AG04449 (cell line): ENCODE measurements at regions of chr1 and their contacts with region 1.

Region 1: DNA sequence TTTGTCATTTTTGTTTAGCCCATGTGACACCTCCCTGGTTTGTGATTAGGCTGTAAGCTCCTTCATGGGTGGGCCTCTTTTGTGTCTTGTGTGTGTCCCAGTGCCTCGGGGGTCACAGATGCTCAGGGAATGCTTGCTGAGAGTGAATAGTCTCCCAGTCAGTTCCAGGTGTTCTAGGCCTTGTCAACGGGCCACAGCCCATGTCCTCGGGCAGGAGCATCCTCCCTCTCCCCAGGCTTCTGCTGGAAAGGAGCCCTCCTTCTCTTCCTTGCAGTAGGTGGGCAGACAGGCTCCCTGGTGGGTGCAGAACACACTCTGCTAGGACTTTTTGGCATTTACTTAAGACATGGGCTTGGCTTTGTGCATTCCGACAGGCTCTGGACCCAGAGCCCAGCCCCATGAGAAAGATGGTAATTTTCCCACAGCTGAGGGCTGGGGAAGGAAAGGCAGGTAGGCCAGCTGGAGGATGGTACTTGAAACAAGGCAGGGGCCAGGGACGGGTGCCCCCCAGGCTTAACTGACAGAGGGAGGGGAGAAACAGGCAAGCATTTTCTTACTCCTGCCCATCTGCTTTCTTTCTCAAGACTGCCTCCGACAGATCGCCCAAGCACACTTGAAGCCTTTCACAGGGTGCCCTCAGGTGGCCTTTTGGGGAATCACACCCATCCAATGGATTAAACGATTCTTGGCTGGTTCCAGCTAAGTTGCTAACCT is 7.1 kb upstream of the CPLANE2 start:
- DNase-seq: peak; percentile 36
- H3K4me3 ChIP-seq: no peak overlapping the region
- CTCF ChIP-seq: peak; percentile 80

Region 2: GRCh38 chr1:16187748-16188401 is 56.2 kb before region 1 on chr1:
- CTCF ChIA-PET with region 1: interaction called, 13 read pairs
- POLR2A ChIA-PET with region 1: no interaction called
- DNase-seq: no peak
- H3K4me3 ChIP-seq: no peak overlapping the region
- CTCF ChIP-seq: peak; percentile 97

Region 3: DNA sequence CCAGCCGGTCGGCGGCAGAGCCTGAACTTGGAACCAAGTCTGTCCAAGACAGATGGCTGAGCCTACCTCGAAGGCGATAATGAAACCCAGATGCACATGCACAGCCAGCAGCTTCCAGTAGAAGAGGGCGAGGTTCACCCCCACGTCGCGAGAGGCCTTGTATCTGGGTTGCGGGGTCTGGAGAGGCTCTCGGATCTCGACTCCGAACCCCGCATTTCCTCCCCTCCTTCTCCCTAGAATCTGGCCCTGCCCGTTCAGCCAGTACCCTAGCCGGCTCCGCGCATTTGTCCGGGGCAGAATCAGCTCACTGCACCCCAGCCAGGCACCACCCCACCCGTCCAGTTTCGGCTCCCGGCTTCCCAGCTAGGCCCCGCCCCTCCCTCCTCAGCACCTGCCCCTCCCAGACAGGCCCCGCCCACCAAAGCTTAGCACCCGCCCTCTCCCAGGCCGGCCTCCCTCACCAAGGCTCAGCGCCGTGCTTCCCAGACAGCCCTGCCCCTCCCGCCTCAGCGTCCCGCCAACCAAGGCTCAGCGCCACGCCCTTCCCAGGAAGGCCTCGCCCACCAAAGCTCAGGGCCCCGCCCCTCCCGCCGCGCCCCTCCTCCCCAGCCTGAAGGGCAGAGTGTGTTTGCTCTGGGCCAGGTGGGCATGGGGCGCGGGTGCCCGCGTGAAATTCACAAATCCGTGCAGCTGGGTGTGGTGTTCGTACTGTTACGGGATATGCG is 26.9 kb before region 1 on chr1:
- CTCF ChIA-PET with region 1: interaction called, 16 read pairs
- POLR2A ChIA-PET with region 1: no interaction called
- DNase-seq: peak; percentile 34
- H3K4me3 ChIP-seq: peak overlapping the region; percentile 64
- CTCF ChIP-seq: no peak

Region 4: GRCh38 chr1:16260814-16261213 is 16.7 kb after region 1 on chr1:
- CTCF ChIA-PET with region 1: interaction called, 60 read pairs
- POLR2A ChIA-PET with region 1: interaction called, 4 read pairs
- DNase-seq: peak; percentile 49
- H3K4me3 ChIP-seq: no peak overlapping the region
- CTCF ChIP-seq: no peak

Region 5: DNA sequence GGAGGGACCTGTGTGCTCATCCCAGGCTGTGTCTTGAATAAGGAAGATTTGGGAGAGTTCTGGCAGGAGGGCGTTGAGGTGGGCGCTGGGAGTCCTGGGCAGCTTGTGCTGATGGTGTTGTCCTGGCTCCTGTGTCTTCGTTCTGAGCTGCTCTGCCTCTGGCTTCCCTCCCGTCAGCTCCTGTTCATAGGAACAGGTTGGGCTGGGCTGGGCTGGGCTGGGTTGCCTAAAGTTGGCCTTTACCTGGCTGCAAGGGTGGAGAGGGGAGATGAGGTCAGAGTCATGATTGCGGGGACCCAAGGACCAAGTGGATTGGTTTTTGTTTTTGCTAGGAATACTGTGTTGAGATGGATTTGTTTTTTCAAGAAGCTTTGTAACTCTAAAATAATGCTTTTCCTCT is 205.6 kb after region 1 on chr1:
- CTCF ChIA-PET with region 1: no interaction called
- POLR2A ChIA-PET with region 1: no interaction called
- DNase-seq: no peak
- H3K4me3 ChIP-seq: no peak overlapping the region
- CTCF ChIP-seq: no peak